Common myeloid progenitor, CD34-positive (primary cell): ENCODE measurements at regions of chr16 and their contacts with region 1.

Region 1: GRCh38 chr16:66933774-66934152 is 439 bp downstream of the CIAO2B start:
- DNase-seq: no peak
- H3K4me3 ChIP-seq: peak overlapping the region; percentile 76 to 98 (median 92)
- H3K27ac ChIP-seq: peak overlapping the region; percentile 92 to 93
- H3K4me1 ChIP-seq: peaks cover 3 to 30% (median 25%) of the 10 kb centered on the region in 4 experiments
- H3K27me3 ChIP-seq: no peaks in the 10 kb centered on the region

Region 2: DNA sequence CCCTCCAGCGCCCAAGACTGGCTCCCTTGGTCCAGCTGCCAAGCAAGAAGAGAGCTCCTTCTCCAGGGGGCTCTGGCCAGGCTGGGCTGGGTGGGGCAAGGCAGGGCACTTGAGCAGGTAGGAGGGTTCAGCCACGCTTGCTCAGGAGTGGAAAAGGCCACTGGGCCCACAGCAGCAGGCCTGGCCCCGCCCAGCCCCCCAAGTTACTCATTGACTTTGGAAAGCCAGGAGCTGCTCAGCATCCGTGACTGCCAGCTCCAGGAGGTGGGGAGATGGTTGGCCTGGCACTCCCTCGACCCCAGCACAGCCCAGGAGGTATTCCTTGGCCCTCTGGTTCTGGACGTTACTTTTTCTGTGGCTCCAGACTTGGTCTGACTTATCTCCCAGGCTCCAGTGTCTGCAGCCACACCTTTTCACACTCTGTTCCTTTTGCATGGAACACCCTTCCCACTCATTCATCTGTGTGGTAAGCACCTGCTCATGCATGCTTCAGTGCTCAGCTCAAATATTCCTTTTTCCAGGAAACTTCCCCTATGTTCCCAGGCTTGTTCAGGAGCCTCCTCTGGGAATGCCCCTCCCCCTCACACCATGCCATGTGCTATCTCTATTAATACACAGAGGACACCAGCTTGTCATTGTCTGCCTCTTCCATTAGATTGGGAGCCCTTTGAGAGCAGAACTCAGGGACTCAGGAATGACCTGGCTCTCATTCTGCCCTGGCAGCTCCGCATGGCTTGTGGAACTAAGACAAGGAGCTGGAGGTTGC is 14.8 kb before region 1 on chr16 and contains the start of gene CDH16:
- CTCF ChIA-PET with region 1: interaction called, 473 read pairs
- POLR2A ChIA-PET with region 1: no interaction called
- DNase-seq: no peak
- H3K4me3 ChIP-seq: no peak within 1 kb of the TSS
- H3K27ac ChIP-seq: no peak within 1 kb of the TSS
- H3K4me1 ChIP-seq: no peaks in the 10 kb centered on the region
- H3K27me3 ChIP-seq: peaks cover 0 to 32% (median 25%) of the 10 kb centered on the region in 5 experiments

Region 3: GRCh38 chr16:66977341-66978113 is 43.8 kb after region 1 on chr16:
- CTCF ChIA-PET with region 1: no interaction called
- POLR2A ChIA-PET with region 1: no interaction called
- DNase-seq: peak; percentile 75 to 90 (median 89)
- H3K4me3 ChIP-seq: no peak overlapping the region
- H3K27ac ChIP-seq: no peak overlapping the region
- H3K4me1 ChIP-seq: peaks cover 0 to 1% (median 0%) of the 10 kb centered on the region in 4 experiments
- H3K27me3 ChIP-seq: peaks cover 0 to 5% (median 0%) of the 10 kb centered on the region in 5 experiments

Region 4: DNA sequence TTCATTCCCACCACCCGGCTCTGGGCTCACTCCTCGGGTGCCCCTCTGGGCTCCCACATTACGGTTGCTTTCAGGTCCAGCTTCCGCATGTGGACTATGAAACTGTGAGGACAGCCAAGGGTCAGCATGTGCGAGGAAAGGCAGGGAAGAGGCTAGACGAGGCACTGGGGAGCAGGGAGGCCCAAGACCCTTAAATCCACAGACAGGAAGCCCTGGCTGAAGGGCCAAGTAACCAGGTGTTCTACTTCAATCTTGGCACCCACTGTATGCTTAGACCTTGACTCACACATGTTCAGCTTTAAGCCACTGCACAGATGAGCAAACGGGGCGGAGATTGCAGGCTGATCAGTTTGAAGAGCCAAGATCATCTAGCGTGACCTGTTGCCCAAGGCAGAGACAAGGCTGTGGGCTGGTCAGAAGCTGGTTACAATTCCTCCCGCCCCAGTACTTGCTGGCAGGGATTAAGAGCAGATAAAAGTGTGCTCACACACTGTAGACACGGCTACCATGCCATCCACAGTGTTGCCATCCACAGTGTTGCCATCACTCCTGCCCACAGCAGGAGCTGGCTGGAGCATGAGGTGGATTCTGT is 54.5 kb after region 1 on chr16 and contains the start of gene CES4A:
- CTCF ChIA-PET with region 1: no interaction called
- POLR2A ChIA-PET with region 1: no interaction called
- DNase-seq: no peak
- H3K4me3 ChIP-seq: no peak within 1 kb of the TSS
- H3K27ac ChIP-seq: no peak within 1 kb of the TSS
- H3K4me1 ChIP-seq: no peaks in the 10 kb centered on the region
- H3K27me3 ChIP-seq: no peaks in the 10 kb centered on the region

Region 5: DNA sequence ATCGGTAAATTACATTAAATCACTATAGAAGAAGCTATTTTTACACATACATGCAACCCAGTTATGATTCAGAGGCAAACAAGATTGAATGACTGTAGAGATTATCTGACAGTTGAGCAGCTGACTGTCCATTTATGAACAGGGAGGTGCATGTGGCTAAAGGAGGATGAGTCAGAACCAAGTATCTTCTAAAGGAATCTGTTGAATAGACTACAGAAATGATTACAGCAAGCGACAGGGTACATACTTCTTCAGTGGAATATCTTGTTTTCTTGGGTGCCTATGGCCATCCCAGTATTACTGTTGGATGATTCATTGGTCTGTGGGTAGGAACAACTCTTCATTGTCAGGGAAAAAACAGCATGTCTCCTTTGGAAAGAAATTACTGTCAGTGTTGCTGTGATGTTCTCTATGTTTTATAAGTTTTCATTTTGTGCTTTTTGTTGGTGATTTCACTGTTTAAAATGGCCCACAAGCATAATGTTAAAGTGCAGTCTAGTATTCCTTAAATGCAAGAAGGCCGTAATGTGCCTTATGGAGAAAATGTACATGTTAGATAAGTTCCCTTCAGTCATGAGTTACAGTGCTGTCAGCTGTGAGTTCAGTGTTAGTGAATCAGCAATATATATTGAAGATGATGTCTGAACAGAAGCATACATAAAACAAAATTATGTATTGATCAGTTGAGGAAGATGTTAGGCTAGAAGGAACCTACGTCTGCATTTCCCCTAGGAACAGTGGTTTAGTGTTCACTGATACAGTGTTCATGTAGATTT is 122.1 kb after region 1 on chr16:
- CTCF ChIA-PET with region 1: no interaction called
- POLR2A ChIA-PET with region 1: no interaction called
- DNase-seq: peak in 2 of 3 donors; percentile 38 to 56
- H3K4me3 ChIP-seq: no peak overlapping the region
- H3K27ac ChIP-seq: peak overlapping the region in 1 of 2 experiments; percentile 6
- H3K4me1 ChIP-seq: peaks cover 5 to 37% (median 18%) of the 10 kb centered on the region in 4 experiments
- H3K27me3 ChIP-seq: no peaks in the 10 kb centered on the region